IMR-90 (cell line): ENCODE measurements at regions of chr10 and their contacts with region 1.

Region 1: GRCh38 chr10:27041196-27041595 is 59.1 kb downstream of the ANKRD26 start:
- DNase-seq: peak; percentile 32
- ATAC-seq: no peak
- H3K4me3 ChIP-seq: no peak overlapping the region
- H3K27ac ChIP-seq: no peak overlapping the region
- H3K4me1 ChIP-seq: peaks cover 6% of the 10 kb centered on the region; the same call in 1 of the 2 replicates
- H3K27me3 ChIP-seq: no peaks in the 10 kb centered on the region
- CTCF ChIP-seq: no peak
- POLR2A ChIP-seq: no peak
- RAD21 ChIP-seq: no peak

Region 2: DNA sequence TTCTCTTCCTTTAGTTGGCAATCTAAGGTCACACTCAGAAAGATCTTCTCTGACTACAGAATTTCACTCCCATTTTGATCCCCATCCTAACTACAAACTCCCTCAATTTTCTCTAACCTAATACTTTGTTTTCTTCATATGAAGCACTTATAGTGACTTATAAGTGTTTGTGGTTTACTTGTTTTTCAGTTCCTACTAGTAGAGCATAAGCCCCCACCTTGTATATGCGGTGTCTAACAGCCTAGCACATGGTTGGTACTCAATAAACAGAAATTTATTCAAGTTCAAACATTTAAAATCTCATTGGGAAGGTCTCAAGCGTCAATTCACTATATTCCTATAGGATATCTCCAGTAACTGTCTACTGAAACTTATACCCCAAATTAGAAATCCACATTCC is 23.9 kb after region 1 on chr10:
- CTCF ChIA-PET with region 1: no interaction called
- POLR2A ChIA-PET with region 1: no interaction called
- dilution Hi-C with region 1: no loop called
- in situ Hi-C with region 1: no loop called
- intact Hi-C with region 1: loop called (anchors 2 kb)
- DNase-seq: no peak
- ATAC-seq: no peak
- H3K4me3 ChIP-seq: no peak overlapping the region
- H3K27ac ChIP-seq: no peak overlapping the region
- H3K4me1 ChIP-seq: peaks cover 2% of the 10 kb centered on the region; the same call in 1 of the 2 replicates
- H3K27me3 ChIP-seq: no peaks in the 10 kb centered on the region
- CTCF ChIP-seq: no peak
- POLR2A ChIP-seq: no peak
- RAD21 ChIP-seq: no peak

Region 3: DNA sequence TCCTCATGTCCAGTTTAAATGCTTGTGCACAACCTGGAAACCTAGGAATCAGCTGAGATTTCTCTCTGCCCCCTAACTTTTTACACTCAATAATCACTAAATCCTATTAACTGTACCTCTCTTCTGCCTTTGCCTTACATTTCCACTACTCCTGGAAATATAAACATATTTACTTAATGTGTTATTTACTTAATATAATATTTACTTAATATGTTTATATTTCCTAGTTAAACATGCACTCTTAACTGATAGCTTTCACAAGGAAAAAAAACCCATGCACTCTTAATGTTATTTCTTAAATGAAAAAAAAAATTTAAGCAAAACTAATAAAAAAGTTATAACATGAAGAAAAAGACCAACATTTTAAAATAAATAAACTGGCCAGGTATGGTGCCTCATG is 41.9 kb after region 1 on chr10:
- CTCF ChIA-PET with region 1: no interaction called
- POLR2A ChIA-PET with region 1: no interaction called
- dilution Hi-C with region 1: no loop called
- in situ Hi-C with region 1: no loop called
- intact Hi-C with region 1: no loop called
- DNase-seq: no peak
- ATAC-seq: no peak
- H3K4me3 ChIP-seq: no peak overlapping the region
- H3K27ac ChIP-seq: no peak overlapping the region
- H3K4me1 ChIP-seq: no peaks in the 10 kb centered on the region
- H3K27me3 ChIP-seq: no peaks in the 10 kb centered on the region
- CTCF ChIP-seq: no peak
- POLR2A ChIP-seq: no peak
- RAD21 ChIP-seq: no peak

Region 4: GRCh38 chr10:27169849-27170248 is 128.7 kb after region 1 on chr10:
- CTCF ChIA-PET with region 1: no interaction called
- POLR2A ChIA-PET with region 1: no interaction called
- dilution Hi-C with region 1: no loop called
- in situ Hi-C with region 1: no loop called
- intact Hi-C with region 1: no loop called
- DNase-seq: no peak
- ATAC-seq: no peak
- H3K4me3 ChIP-seq: no peak overlapping the region
- H3K27ac ChIP-seq: no peak overlapping the region
- H3K4me1 ChIP-seq: no peaks in the 10 kb centered on the region
- H3K27me3 ChIP-seq: no peaks in the 10 kb centered on the region
- CTCF ChIP-seq: no peak
- POLR2A ChIP-seq: no peak
- RAD21 ChIP-seq: no peak